HCT116 (cell line): ENCODE measurements at regions of chr6 and their contacts with region 1.

Region 1: GRCh38 chr6:27295301-27296081 is 16.6 kb downstream of the POM121L2 start:
- DNase-seq: peak; percentile 90
- ATAC-seq: peak; percentile 84
- H3K4me3 ChIP-seq: peak overlapping the region; percentile 51 to 72
- H3K27ac ChIP-seq: peak overlapping the region; percentile 64
- H3K4me1 ChIP-seq: peaks cover 8 to 24% of the 10 kb centered on the region in 2 experiments
- H3K27me3 ChIP-seq: no peaks in the 10 kb centered on the region
- CTCF ChIP-seq: no peak
- POLR2A ChIP-seq: no peak
- RAD21 ChIP-seq: no peak

Region 2: GRCh38 chr6:27157459-27158315 is 137.8 kb before region 1 on chr6:
- CTCF ChIA-PET with region 1: no interaction called
- POLR2A ChIA-PET with region 1: no interaction called
- RAD21 ChIA-PET with region 1: no interaction called
- intact Hi-C with region 1: no loop called
- DNase-seq: peak; percentile 65
- ATAC-seq: peak; percentile 87
- H3K4me3 ChIP-seq: peak overlapping the region; percentile 39 to 52
- H3K27ac ChIP-seq: peak overlapping the region; percentile 57
- H3K4me1 ChIP-seq: peaks cover 4 to 41% of the 10 kb centered on the region in 2 experiments; a peak in 3 of 4 replicates
- H3K27me3 ChIP-seq: no peaks in the 10 kb centered on the region
- CTCF ChIP-seq: peak; percentile 44 to 59 (median 56); a peak in 5 of 6 replicates
- POLR2A ChIP-seq: no peak
- RAD21 ChIP-seq: peak; percentile 49

Region 3: DNA sequence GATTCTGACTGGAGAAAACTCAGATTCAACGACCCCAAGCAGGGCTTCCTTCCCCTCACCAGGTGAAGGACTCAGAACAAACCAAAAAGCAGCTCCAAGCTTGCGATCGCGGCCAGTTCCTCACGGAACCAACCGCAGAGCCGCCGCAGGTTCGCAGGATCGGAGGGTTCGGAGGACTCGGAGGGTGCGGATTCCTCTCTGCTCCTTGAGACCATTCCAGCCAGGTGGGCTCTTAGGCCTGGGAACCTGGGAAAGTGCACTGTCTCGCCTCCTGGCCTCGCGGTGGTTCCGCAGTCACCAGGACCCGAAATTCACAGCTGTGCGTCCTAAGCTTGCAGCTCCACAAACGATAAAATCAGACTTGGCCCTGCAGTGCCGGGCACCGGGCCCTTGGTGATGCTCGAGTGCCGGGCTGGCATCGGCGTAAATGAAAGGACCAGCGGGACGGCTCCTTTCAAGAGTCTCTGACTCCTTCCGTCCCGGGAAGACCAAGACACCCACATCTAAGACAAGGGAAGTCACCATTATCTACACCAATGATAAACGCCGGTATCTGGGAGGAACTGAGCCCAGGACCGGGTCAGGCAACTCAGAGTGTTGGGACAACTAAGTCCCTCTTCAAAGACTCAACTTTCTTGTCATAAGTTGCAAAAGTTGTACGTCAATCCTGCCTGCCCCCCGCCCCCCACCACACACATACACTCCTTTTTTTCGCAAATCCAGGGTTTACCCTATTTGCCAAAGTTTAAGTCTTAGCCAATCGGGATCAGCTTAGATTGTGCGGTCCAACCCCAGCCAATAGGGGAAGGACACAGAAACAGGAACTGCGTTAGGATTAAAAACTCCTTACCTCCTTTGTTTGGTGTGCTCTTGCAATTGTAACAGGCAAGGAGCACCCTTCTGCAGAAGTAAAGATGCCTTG is 117.7 kb before region 1 on chr6:
- CTCF ChIA-PET with region 1: no interaction called
- POLR2A ChIA-PET with region 1: no interaction called
- RAD21 ChIA-PET with region 1: no interaction called
- intact Hi-C with region 1: loop called (anchors 10 kb)
- DNase-seq: peak; percentile 87
- ATAC-seq: peak; percentile 86
- H3K4me3 ChIP-seq: peak overlapping the region; percentile 57 to 65
- H3K27ac ChIP-seq: peak overlapping the region; percentile 48
- H3K4me1 ChIP-seq: peaks cover 4 to 17% of the 10 kb centered on the region in 2 experiments; a peak in 3 of 4 replicates
- H3K27me3 ChIP-seq: no peaks in the 10 kb centered on the region
- CTCF ChIP-seq: peak; percentile 22 to 64 (median 61); a peak in 5 of 6 replicates
- POLR2A ChIP-seq: no peak
- RAD21 ChIP-seq: peak; percentile 69

Region 4: DNA sequence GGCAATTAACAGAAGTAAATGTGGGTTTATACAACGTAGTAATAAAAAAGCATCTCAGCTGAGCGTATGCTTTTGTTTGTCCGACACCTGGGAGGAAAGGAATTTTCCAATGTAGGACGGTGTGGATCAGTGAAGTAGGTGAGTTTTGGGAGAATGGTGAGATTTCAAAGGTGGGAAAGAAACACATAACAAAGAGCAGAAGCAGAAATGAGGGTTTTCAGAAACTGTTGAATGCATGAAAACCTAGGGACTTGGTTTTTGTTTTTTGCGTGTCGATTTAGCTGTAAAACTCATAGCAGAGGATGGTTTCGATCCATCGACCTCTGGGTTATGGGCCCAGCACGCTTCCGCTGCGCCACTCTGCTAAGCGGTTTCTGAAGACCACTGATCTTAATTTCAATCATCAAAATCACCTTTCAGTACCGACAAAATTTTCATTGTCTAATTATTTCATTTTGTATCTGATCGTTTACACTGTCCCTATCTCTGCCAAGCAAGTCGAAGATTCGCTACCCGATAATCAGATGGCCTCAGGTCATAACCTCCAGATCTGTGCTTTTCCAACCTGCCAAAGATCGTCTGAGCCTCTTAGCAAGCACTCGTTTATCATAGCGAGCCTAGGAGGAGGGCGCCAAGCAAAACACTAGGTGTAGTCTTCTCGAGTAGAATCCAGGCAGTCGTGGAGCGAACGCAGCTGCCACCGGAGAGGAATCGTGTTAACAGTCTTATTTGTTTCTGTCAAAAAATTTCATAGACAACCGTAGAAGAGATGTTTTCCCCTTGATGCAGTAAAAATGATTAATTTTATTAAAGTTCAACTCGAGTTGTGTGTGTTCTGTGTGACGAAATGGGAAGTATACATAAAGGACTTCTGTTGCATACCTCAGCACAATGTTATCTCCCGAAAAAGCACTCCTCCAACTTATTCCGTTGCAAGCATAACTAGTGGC is 37.5 kb after region 1 on chr6:
- CTCF ChIA-PET with region 1: interaction called, 3 read pairs
- POLR2A ChIA-PET with region 1: interaction called, 5 read pairs
- RAD21 ChIA-PET with region 1: no interaction called
- intact Hi-C with region 1: loop called (anchors 5 kb)
- DNase-seq: peak; percentile 76
- ATAC-seq: peak; percentile 78
- H3K4me3 ChIP-seq: peak overlapping the region; percentile 47 to 58
- H3K27ac ChIP-seq: peak overlapping the region; percentile 34; the same call in 1 of the 2 replicates
- H3K4me1 ChIP-seq: peaks cover 10 to 19% of the 10 kb centered on the region in 2 experiments; a peak in 3 of 4 replicates
- H3K27me3 ChIP-seq: no peaks in the 10 kb centered on the region
- CTCF ChIP-seq: no peak
- POLR2A ChIP-seq: no peak
- RAD21 ChIP-seq: peak; percentile 25

Region 5: GRCh38 chr6:27503436-27504030 is 208.0 kb after region 1 on chr6:
- CTCF ChIA-PET with region 1: no interaction called
- POLR2A ChIA-PET with region 1: no interaction called
- RAD21 ChIA-PET with region 1: no interaction called
- intact Hi-C with region 1: no loop called
- DNase-seq: peak; percentile 72
- ATAC-seq: peak; percentile 51
- H3K4me3 ChIP-seq: peak overlapping the region; percentile 51 to 59
- H3K27ac ChIP-seq: peak overlapping the region; percentile 42
- H3K4me1 ChIP-seq: peaks cover 9 to 34% of the 10 kb centered on the region in 2 experiments; a peak in 3 of 4 replicates
- H3K27me3 ChIP-seq: no peaks in the 10 kb centered on the region
- CTCF ChIP-seq: no peak
- POLR2A ChIP-seq: no peak
- RAD21 ChIP-seq: no peak

Region 6: GRCh38 chr6:27608916-27609883 is 313.7 kb after region 1 on chr6:
- CTCF ChIA-PET with region 1: no interaction called
- POLR2A ChIA-PET with region 1: no interaction called
- RAD21 ChIA-PET with region 1: no interaction called
- intact Hi-C with region 1: loop called (anchors 10 kb)
- DNase-seq: peak; percentile 72
- ATAC-seq: peak; percentile 62
- H3K4me3 ChIP-seq: no peak overlapping the region
- H3K27ac ChIP-seq: peak overlapping the region; percentile 47; the same call in 1 of the 2 replicates
- H3K4me1 ChIP-seq: peaks cover 9 to 36% of the 10 kb centered on the region in 2 experiments
- H3K27me3 ChIP-seq: no peaks in the 10 kb centered on the region
- CTCF ChIP-seq: peak; percentile 75 to 91 (median 83)
- POLR2A ChIP-seq: no peak
- RAD21 ChIP-seq: peak; percentile 85

Region 7: DNA sequence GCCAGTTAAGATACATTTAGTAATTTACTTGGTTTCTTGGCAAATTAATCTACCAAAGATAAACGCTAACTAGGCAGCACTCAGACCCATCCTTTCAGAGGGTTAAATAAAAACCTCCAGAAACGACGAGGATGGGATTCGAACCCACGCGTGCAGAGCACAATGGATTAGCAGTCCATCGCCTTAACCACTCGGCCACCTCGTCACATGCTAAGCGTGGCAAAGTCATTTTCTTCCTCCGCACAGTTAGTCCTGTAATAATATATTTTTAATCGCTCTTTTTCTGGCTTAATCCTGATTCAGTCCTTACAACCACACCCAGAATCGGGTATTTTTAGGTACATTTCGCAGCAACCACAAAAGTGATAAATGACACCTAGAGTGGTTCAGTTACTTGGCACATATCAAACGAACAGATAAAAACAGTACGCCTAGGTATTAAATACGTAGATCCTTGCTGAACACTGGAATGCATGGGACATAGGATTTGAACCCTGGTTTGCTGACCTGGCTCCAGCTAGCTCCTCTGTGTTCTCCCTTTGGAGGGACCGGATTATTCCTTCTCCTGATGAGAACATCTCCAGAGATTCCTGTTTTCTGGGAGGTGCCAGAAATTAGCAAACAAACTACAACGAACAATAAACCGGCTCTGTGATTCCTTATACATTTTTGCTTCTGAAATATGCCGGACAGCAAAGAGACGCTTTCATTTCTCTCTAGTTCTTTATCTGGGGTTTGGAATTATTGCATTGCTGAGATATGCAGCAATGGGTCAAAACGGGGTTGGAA is 1301.9 kb after region 1 on chr6:
- CTCF ChIA-PET with region 1: no interaction called
- POLR2A ChIA-PET with region 1: no interaction called
- RAD21 ChIA-PET with region 1: no interaction called
- intact Hi-C with region 1: loop called (anchors 5 kb)
- DNase-seq: peak; percentile 83
- ATAC-seq: peak; percentile 86
- H3K4me3 ChIP-seq: peak overlapping the region; percentile 38 to 57
- H3K27ac ChIP-seq: peak overlapping the region; percentile 72
- H3K4me1 ChIP-seq: peaks cover 9 to 31% of the 10 kb centered on the region in 2 experiments; a peak in 3 of 4 replicates
- H3K27me3 ChIP-seq: no peaks in the 10 kb centered on the region
- CTCF ChIP-seq: no peak
- POLR2A ChIP-seq: no peak
- RAD21 ChIP-seq: 0 out of 2 replicates have a peak, but pooled peaks have one; percentile 7